Left ventricle myocardium superior (tissue), 1 donor: ENCODE measurements at regions of chr9 and their contacts with region 1.

Region 1: GRCh38 chr9:108521063-108521590 is 334.7 kb downstream of the ACTL7B start:
- DNase-seq: no peak
- ATAC-seq: no peak

Region 2: DNA sequence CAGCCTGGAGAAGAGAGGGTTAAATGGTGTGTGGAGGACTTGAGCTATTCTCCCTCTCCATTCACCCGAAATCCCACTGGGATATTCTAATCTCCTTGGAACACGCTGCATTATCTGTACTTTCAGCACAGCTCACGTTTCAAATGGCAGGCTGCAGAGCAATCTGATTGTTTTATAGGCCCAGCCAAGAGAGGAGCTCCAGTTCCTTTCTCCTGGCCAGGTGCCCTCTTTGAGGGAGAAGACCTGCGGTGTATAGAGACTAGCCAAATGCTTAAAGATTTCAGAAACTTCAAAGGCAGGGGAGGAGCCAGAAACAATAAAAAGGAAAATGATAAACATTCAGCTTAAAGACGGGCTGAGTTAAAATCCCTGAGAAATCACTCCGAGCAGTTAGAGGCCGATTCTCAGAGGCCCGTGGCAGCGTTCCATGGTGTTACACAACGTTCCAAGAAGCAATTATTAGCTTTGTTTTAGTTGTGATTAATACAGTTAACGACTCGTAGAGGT is 467.5 kb before region 1 on chr9:
- intact Hi-C with region 1: loop called (anchors 5 kb)
- DNase-seq: peak; percentile 79
- ATAC-seq: peak; percentile 83

Region 3: GRCh38 chr9:108468402-108468801 is 52.7 kb before region 1 on chr9:
- intact Hi-C with region 1: no loop called
- DNase-seq: peak; percentile 40
- ATAC-seq: no peak

Region 4: GRCh38 chr9:108478431-108478837 is 42.7 kb before region 1 on chr9:
- intact Hi-C with region 1: no loop called
- DNase-seq: no peak
- ATAC-seq: peak; percentile 14